ENCODE measurements at regions of chr12 and their contacts with region 1.

Region 1: GRCh38 chr12:121697098-121697698 is 15.4 kb upstream of the TMEM120B start:
- DNase-seq: peak; percentile 45
- H3K4me3 ChIP-seq: no peak overlapping the region
- H3K27ac ChIP-seq: no peak overlapping the region
- H3K4me1 ChIP-seq: no peaks in the 10 kb centered on the region
- H3K27me3 ChIP-seq: no peaks in the 10 kb centered on the region
- CTCF ChIP-seq: peak; percentile 53

Region 2: GRCh38 chr12:121773011-121773777 is 76.0 kb after region 1 on chr12:
- intact Hi-C with region 1: loop called (anchors 2 kb)
- DNase-seq: peak; percentile 76
- H3K4me3 ChIP-seq: no peak overlapping the region
- H3K27ac ChIP-seq: no peak overlapping the region
- H3K4me1 ChIP-seq: peaks cover 4% of the 10 kb centered on the region
- H3K27me3 ChIP-seq: no peaks in the 10 kb centered on the region
- CTCF ChIP-seq: peak; percentile 85

Region 3: DNA sequence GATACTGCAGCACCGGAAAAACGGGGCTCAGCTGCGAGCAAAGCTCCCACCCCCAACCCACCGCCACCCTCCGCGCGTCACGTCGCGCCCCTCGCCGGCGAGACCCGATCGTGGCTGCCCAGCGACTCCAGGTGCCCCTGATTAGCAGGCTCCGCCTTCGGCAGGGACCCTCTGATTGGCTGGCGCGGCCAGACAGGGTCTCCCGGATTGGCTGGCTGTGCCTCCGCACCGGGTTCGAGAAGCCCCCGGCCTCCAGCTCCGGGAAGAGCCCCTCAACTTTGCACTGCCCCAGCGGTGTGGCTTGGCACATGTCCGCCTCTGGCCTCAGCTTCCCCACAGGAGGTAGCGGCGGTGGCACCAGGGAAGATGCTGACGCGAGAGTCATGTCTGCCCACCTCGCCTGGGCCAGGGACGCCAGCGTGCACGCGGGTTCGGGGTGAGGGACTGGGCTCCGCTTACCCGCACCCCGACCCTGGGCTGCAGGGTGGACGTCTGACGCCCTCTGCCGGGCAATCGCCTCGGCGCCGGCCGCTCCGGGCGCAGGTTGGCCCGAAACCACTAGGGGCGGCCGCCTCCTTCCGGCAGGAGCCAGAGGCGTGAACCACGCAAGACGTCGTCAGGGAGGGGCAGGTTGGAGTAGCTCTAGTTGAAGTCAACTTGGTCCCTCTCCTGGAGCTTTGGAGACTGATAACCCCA is 96.8 kb after region 1 on chr12:
- intact Hi-C with region 1: loop called (anchors 5 kb)
- DNase-seq: peak; percentile 95
- H3K4me3 ChIP-seq: peak overlapping the region; percentile 70
- H3K27ac ChIP-seq: peak overlapping the region; percentile 78
- H3K4me1 ChIP-seq: peaks cover 38% of the 10 kb centered on the region
- H3K27me3 ChIP-seq: no peaks in the 10 kb centered on the region
- CTCF ChIP-seq: peak; percentile 99

Region 4: DNA sequence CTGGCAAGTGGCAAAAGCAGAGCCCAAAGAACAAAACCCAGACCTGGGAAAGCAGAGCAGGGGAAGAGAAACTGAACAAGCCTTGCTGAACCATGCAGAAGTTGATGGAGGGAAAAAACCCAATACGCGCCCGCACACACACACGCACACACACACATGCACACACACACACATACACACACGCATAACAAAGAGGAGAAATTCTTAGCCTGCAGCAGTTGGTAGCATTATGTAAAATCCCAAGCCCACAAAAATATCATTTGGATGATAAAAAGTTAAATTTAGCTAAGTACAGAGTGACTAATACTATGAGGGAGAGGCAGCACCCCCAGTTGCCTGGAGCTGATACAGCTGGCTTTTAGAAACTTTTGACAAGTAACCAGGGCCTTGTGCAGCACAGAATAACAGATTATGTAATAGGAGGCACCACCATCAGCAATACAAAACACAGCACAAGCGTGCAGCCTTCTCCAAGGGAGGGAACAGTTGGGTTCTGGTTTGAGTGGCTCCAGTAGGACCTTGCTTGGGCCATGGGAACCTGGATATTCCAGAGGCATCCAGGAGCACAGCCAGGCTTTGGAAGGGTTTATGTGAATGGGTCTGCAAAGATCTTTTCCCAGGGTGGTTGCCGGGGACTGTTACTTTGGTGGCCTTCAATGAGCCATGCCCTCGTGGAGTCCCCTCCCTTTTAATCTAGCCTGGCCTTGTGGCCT is 1418.4 kb after region 1 on chr12:
- intact Hi-C with region 1: no loop called
- DNase-seq: no peak
- H3K4me3 ChIP-seq: no peak overlapping the region
- H3K27ac ChIP-seq: peak overlapping the region; percentile 12
- H3K4me1 ChIP-seq: no peaks in the 10 kb centered on the region
- H3K27me3 ChIP-seq: no peaks in the 10 kb centered on the region
- CTCF ChIP-seq: no peak

Measured in colonic mucosa (tissue), 4 donors.